ENCODE measurements at regions of chr11 and their contacts with region 1.

Region 1: DNA sequence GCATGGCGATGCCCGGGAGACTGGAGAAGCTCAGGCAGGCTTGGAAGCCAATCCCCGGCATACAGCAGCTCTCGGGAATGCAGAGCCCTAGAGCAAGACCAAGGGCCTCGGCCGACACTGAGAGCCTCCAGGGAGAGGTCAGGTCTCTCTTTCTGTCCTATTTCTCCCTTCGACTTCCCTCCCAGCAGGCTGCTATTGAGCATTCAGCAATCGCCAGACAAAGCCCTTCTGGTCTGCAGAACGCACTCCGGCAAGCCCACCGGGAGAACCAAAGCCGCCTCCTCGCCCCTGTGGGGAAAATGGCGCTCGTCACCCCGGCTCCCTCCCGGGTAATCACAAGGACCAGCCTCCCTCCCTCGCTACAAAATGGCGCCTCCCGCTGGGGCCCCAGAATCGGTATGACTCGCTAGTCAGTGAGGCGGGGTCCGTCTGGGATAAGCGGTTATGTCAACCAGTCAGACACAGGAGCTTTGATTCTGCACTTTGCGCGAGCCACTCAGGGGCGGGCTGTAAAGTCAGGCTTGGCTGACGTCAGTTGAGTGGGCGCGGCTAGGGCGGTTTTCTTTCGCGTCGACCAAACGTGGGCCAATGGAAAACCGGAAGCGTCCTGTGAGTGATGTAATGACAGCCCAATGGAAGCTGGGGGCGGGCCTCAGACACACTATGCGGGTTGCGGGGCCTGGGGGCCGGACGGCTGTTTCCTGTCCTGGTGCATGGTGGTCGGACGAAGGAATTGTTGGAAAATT is at the start of gene ZNF143:
- DNase-seq: peak; percentile 99 to 100 (median 100)
- ATAC-seq: peak; percentile 89
- H3K4me3 ChIP-seq: peak within 1 kb of the TSS; percentile 89 to 93
- H3K4me3 Mint-ChIP-seq: peak within 1 kb of the TSS; percentile 92
- H3K27ac ChIP-seq: peak within 1 kb of the TSS; percentile 98
- H3K27ac Mint-ChIP-seq: peak within 1 kb of the TSS; percentile 97
- H3K4me1 ChIP-seq: peaks cover 31% of the 10 kb centered on the region
- H3K4me1 Mint-ChIP-seq: peaks cover 33% of the 10 kb centered on the region
- H3K27me3 ChIP-seq: no peaks in the 10 kb centered on the region
- H3K27me3 Mint-ChIP-seq: no peaks in the 10 kb centered on the region
- CTCF ChIP-seq: no peak
- total RNA-seq, gene ZNF143: 13.4 to 15.4 TPM

Region 2: DNA sequence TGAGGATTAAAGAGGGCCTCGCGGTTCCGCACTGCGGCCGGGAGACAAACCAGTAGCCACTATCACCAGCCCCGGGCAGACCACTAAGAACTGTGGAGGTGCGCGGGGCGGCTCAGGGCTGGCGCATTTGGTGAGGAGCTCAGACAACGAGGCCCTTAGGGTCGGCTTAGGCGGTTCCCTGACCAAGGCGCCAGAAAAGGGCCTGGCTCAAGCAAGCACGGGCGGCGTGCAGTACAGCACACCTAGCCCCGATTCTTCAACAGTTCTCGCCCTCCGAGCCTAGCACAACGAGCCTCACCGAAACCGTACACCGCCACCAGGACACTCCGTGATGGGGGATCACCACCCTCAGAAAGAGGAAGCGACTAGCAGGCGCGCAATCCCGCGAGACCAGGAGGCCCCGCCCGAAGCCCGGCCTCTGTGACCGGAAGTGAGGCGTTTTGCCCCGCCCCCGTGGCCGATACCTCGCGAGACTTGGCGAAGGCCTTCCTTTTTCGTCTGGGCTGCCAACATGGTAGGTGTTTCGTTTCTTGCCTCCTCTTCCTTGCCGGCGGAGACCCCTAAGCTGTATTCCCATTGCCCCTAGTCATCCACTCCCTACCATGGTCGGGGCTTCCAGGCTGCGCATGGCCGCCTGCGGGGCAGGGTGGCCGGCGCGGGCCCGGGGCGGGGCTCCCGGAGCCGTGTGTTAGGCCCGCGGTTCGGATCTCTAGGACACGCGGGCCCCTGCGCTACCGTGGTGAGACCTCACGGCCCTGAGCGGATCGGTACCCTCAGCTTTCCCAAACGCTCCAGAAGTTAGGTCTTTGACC is 778.0 kb before region 1 on chr11 and contains the starts of genes RPL27A and TRIM66:
- CTCF ChIA-PET with region 1: no interaction called
- POLR2A ChIA-PET with region 1: interaction called, 3 read pairs
- intact Hi-C with region 1: loop called (anchors 1 to 2 kb)
- DNase-seq: peak; percentile 98 to 100 (median 99)
- ATAC-seq: peak; percentile 92
- H3K4me3 ChIP-seq: peak within 1 kb of the TSS; percentile 63 to 99
- H3K4me3 Mint-ChIP-seq: peak within 1 kb of the TSS; percentile 96
- H3K27ac ChIP-seq: peak within 1 kb of the TSS; percentile 82 to 92
- H3K27ac Mint-ChIP-seq: peak within 1 kb of the TSS; percentile 98
- H3K4me1 ChIP-seq: peaks cover 27% of the 10 kb centered on the region
- H3K4me1 Mint-ChIP-seq: peaks cover 48% of the 10 kb centered on the region
- H3K27me3 ChIP-seq: no peaks in the 10 kb centered on the region
- H3K27me3 Mint-ChIP-seq: no peaks in the 10 kb centered on the region
- CTCF ChIP-seq: no peak
- total RNA-seq, gene RPL27A: 1,595 to 1,676 TPM
- total RNA-seq, gene TRIM66: 8.6 to 9.1 TPM

Region 3: GRCh38 chr11:9003573-9004309 is 456.8 kb before region 1 on chr11 and contains the start of gene NRIP3:
- CTCF ChIA-PET with region 1: no interaction called
- POLR2A ChIA-PET with region 1: no interaction called
- intact Hi-C with region 1: loop called in 1 of 2 experiments (anchors 2 kb)
- DNase-seq: peak; percentile 58 to 91 (median 82)
- ATAC-seq: peak; percentile 92
- H3K4me3 ChIP-seq: peak within 1 kb of the TSS; percentile 47 to 66
- H3K4me3 Mint-ChIP-seq: peak within 1 kb of the TSS; percentile 76
- H3K27ac ChIP-seq: no peak within 1 kb of the TSS
- H3K27ac Mint-ChIP-seq: peak within 1 kb of the TSS; percentile 24
- H3K4me1 ChIP-seq: peaks cover 10% of the 10 kb centered on the region
- H3K4me1 Mint-ChIP-seq: peaks cover 15% of the 10 kb centered on the region
- H3K27me3 ChIP-seq: peaks cover 7 to 24% of the 10 kb centered on the region in 2 experiments
- H3K27me3 Mint-ChIP-seq: peaks cover 32% of the 10 kb centered on the region
- CTCF ChIP-seq: no peak
- total RNA-seq, gene NRIP3: 8.8 to 10.1 TPM

Region 4: GRCh38 chr11:9314291-9315036 is 146.0 kb before region 1 on chr11 and contains the start of gene TMEM41B:
- CTCF ChIA-PET with region 1: no interaction called
- POLR2A ChIA-PET with region 1: interaction called, 50 read pairs
- intact Hi-C with region 1: loop called (anchors 1 kb)
- DNase-seq: peak; percentile 98 to 100 (median 100)
- ATAC-seq: peak; percentile 96
- H3K4me3 ChIP-seq: peak within 1 kb of the TSS; percentile 85 to 99
- H3K4me3 Mint-ChIP-seq: peak within 1 kb of the TSS; percentile 98
- H3K27ac ChIP-seq: peak within 1 kb of the TSS; percentile 87 to 97
- H3K27ac Mint-ChIP-seq: peak within 1 kb of the TSS; percentile 98
- H3K4me1 ChIP-seq: peaks cover 29% of the 10 kb centered on the region
- H3K4me1 Mint-ChIP-seq: peaks cover 35% of the 10 kb centered on the region
- H3K27me3 ChIP-seq: no peaks in the 10 kb centered on the region
- H3K27me3 Mint-ChIP-seq: peaks cover 2% of the 10 kb centered on the region
- CTCF ChIP-seq: no peak
- total RNA-seq, gene TMEM41B: 36.8 TPM

Region 5: DNA sequence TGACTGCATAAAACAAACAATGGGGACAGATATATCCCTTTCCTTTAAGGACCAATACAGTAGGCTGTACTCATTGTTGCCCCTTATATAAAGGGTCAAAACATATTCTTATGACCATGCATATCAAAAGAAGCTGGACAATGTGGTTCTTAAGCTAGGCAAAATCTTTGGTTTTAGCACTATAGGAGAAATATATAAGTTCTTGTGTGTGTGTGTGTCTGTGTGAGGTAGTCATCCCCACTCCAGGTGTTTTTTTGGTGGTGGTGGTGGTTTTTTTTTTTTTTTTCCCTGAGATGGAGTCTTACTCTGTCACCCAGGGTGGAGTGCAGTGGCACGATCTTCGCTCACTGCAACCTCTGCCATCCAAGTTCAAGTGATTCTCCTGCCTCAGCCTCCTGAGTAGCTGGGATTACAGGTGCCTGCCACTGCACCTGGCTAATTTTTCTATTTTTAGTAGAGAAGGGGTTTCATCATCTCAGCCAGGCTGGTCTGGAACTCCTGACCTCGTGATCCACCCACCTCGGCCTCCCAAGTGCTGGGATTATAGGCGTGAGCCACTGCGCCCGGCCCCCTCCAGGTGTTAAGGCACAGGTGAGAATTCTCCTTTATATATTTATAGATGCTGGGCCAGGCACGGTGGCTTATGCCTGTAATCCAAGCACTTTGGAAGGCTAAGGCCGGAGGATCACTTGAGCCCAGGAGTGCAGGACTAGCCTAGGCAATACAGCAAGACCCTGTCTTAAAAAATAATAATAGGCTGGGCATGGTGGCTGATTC is 11.7 kb before region 1 on chr11:
- CTCF ChIA-PET with region 1: no interaction called
- POLR2A ChIA-PET with region 1: interaction called, 23 read pairs
- intact Hi-C with region 1: no loop called
- DNase-seq: no peak
- ATAC-seq: no peak
- H3K4me3 ChIP-seq: no peak overlapping the region
- H3K4me3 Mint-ChIP-seq: no peak overlapping the region
- H3K27ac ChIP-seq: no peak overlapping the region
- H3K27ac Mint-ChIP-seq: no peak overlapping the region
- H3K4me1 ChIP-seq: no peaks in the 10 kb centered on the region
- H3K4me1 Mint-ChIP-seq: no peaks in the 10 kb centered on the region
- H3K27me3 ChIP-seq: no peaks in the 10 kb centered on the region
- H3K27me3 Mint-ChIP-seq: no peaks in the 10 kb centered on the region
- CTCF ChIP-seq: no peak

Region 6: GRCh38 chr11:9573052-9573774 is 112.7 kb after region 1 on chr11 and contains the start of gene WEE1:
- CTCF ChIA-PET with region 1: no interaction called
- POLR2A ChIA-PET with region 1: interaction called, 11 read pairs
- intact Hi-C with region 1: loop called (anchors 1 to 5 kb)
- DNase-seq: peak; percentile 90 to 97 (median 96)
- ATAC-seq: peak; percentile 90
- H3K4me3 ChIP-seq: peak within 1 kb of the TSS; percentile 76 to 95
- H3K4me3 Mint-ChIP-seq: peak within 1 kb of the TSS; percentile 86
- H3K27ac ChIP-seq: peak within 1 kb of the TSS; percentile 41 to 62
- H3K27ac Mint-ChIP-seq: peak within 1 kb of the TSS; percentile 70
- H3K4me1 ChIP-seq: peaks cover 11% of the 10 kb centered on the region
- H3K4me1 Mint-ChIP-seq: peaks cover 23% of the 10 kb centered on the region
- H3K27me3 ChIP-seq: no peaks in the 10 kb centered on the region
- H3K27me3 Mint-ChIP-seq: peaks cover 11% of the 10 kb centered on the region
- CTCF ChIP-seq: no peak
- total RNA-seq, gene WEE1: 3.9 to 5.3 TPM

Region 7: GRCh38 chr11:9594267-9595046 is 134.0 kb after region 1 on chr11:
- CTCF ChIA-PET with region 1: no interaction called
- POLR2A ChIA-PET with region 1: no interaction called
- intact Hi-C with region 1: no loop called
- DNase-seq: no peak
- ATAC-seq: no peak
- H3K4me3 ChIP-seq: no peak overlapping the region
- H3K4me3 Mint-ChIP-seq: no peak overlapping the region
- H3K27ac ChIP-seq: no peak overlapping the region
- H3K27ac Mint-ChIP-seq: peak overlapping the region; percentile 4
- H3K4me1 ChIP-seq: no peaks in the 10 kb centered on the region
- H3K4me1 Mint-ChIP-seq: no peaks in the 10 kb centered on the region
- H3K27me3 ChIP-seq: no peaks in the 10 kb centered on the region
- H3K27me3 Mint-ChIP-seq: no peaks in the 10 kb centered on the region
- CTCF ChIP-seq: no peak

Region 8: GRCh38 chr11:10808553-10809372 is 1348.3 kb after region 1 on chr11 and contains the start of gene EIF4G2:
- CTCF ChIA-PET with region 1: no interaction called
- POLR2A ChIA-PET with region 1: interaction called, 6 read pairs
- intact Hi-C with region 1: loop called in 1 of 2 experiments (anchors 2 kb)
- DNase-seq: peak; percentile 95 to 99 (median 98)
- ATAC-seq: peak; percentile 90
- H3K4me3 ChIP-seq: peak within 1 kb of the TSS; percentile 85 to 87
- H3K4me3 Mint-ChIP-seq: peak within 1 kb of the TSS; percentile 97
- H3K27ac ChIP-seq: peak within 1 kb of the TSS; percentile 92 to 96
- H3K27ac Mint-ChIP-seq: peak within 1 kb of the TSS; percentile 99
- H3K4me1 ChIP-seq: peaks cover 47% of the 10 kb centered on the region
- H3K4me1 Mint-ChIP-seq: peaks cover 45% of the 10 kb centered on the region
- H3K27me3 ChIP-seq: no peaks in the 10 kb centered on the region
- H3K27me3 Mint-ChIP-seq: no peaks in the 10 kb centered on the region
- CTCF ChIP-seq: no peak
- total RNA-seq, gene EIF4G2: 1,089 to 1,144 TPM